Naive thymus-derived CD4-positive, alpha-beta T cell (primary cell): ENCODE measurements at regions of chr4 and their contacts with region 1.

Region 1: GRCh38 chr4:151760712-151761527 is at the start of gene GATB:
- DNase-seq: peak; percentile 67 to 97 (median 93)
- ATAC-seq: peak; percentile 99
- H3K4me3 ChIP-seq: peak within 1 kb of the TSS; percentile 87
- H3K4me3 Mint-ChIP-seq: peak within 1 kb of the TSS; percentile 88 to 99 (median 98)
- H3K27ac ChIP-seq: peak within 1 kb of the TSS; percentile 69
- H3K27ac Mint-ChIP-seq: peak within 1 kb of the TSS; percentile 94 to 99 (median 98)
- H3K4me1 ChIP-seq: peaks cover 9 to 13% of the 10 kb centered on the region in 2 donors
- H3K4me1 Mint-ChIP-seq: peaks cover 7 to 24% (median 18%) of the 10 kb centered on the region in 7 donors
- H3K27me3 ChIP-seq: no peaks in the 10 kb centered on the region
- H3K27me3 Mint-ChIP-seq: peaks cover 0 to 8% (median 4%) of the 10 kb centered on the region in 5 donors
- total RNA-seq, gene GATB: 10.5 to 17.3 (median 14.2) TPM

Region 2: GRCh38 chr4:151099229-151099975 is 661.5 kb before region 1 on chr4 and contains the start of gene RPS3A:
- CTCF ChIA-PET with region 1: no interaction called
- POLR2A ChIA-PET with region 1: interaction called, 5 read pairs
- intact Hi-C with region 1: loop called in 1 of 2 experiments (anchors 1 kb)
- DNase-seq: peak; percentile 95 to 100 (median 99)
- ATAC-seq: peak; percentile 97
- H3K4me3 ChIP-seq: peak within 1 kb of the TSS; percentile 96
- H3K4me3 Mint-ChIP-seq: peak within 1 kb of the TSS; percentile 89 to 99 (median 96)
- H3K27ac ChIP-seq: peak within 1 kb of the TSS; percentile 89
- H3K27ac Mint-ChIP-seq: peak within 1 kb of the TSS; percentile 97 to 99 (median 98)
- H3K4me1 ChIP-seq: peaks cover 14 to 18% of the 10 kb centered on the region in 2 donors
- H3K4me1 Mint-ChIP-seq: peaks cover 24 to 43% (median 28%) of the 10 kb centered on the region in 7 donors
- H3K27me3 ChIP-seq: no peaks in the 10 kb centered on the region
- H3K27me3 Mint-ChIP-seq: peaks cover 0 to 4% (median 0%) of the 10 kb centered on the region in 5 donors
- total RNA-seq, gene RPS3A: 1,723 to 5,358 (median 3,483) TPM

Region 3: DNA sequence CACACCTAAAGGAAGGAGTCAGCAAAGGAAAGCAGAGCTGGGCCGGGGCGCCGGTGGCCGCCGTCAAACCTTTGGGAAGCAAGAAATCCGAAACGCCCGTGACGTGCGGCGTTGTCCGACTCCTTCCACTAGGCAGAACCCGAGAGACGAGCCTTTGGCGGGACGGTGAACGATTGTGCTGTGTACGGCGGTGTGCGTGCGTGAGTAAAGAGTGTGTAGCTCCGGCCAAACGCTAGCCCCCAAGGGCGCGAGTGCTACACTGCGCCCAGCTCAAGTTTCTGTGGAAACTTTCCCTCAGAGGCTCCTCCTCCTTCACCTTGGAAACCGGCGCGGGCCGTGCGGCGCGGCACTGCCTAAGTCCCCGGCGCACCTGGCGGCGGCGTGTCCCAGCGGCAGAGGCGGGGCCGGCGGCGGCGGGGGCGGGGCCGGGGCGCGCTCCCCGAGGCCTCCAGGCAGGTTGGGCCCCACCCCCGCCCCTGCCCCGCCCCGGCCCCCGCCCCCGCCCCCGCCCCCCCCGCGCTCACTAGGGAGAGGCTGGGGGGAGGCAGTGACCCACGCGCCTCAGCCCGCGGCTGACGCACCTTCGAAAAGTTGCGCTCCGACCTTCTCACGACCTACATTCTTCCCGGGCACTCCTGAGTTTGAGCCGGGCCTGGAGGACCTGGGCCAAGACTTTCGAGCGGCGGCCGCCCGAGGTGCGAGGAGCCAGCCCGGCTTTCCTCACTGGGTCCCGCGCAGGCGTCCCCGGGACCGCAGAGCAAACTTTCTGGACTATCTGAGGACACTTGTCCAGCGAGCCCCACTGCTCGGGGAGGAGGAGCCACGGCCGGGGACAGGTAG is 352.1 kb before region 1 on chr4 and contains the start of gene FHIP1A:
- CTCF ChIA-PET with region 1: no interaction called
- POLR2A ChIA-PET with region 1: no interaction called
- intact Hi-C with region 1: loop called (anchors 1 kb)
- DNase-seq: peak; percentile 67 to 89 (median 87)
- ATAC-seq: peak; percentile 96
- H3K4me3 ChIP-seq: peak within 1 kb of the TSS; percentile 63
- H3K4me3 Mint-ChIP-seq: peak within 1 kb of the TSS; percentile 86 to 97 (median 94)
- H3K27ac ChIP-seq: peak within 1 kb of the TSS; percentile 53
- H3K27ac Mint-ChIP-seq: peak within 1 kb of the TSS; percentile 21 to 92 (median 85)
- H3K4me1 ChIP-seq: peaks cover 0 to 6% of the 10 kb centered on the region in 2 donors
- H3K4me1 Mint-ChIP-seq: peaks cover 15 to 26% (median 23%) of the 10 kb centered on the region in 7 donors
- H3K27me3 ChIP-seq: no peaks in the 10 kb centered on the region
- H3K27me3 Mint-ChIP-seq: peaks cover 0 to 56% (median 8%) of the 10 kb centered on the region in 5 donors
- total RNA-seq, gene FHIP1A: 0.05 to 2.7 (median 1.9) TPM

Region 4: DNA sequence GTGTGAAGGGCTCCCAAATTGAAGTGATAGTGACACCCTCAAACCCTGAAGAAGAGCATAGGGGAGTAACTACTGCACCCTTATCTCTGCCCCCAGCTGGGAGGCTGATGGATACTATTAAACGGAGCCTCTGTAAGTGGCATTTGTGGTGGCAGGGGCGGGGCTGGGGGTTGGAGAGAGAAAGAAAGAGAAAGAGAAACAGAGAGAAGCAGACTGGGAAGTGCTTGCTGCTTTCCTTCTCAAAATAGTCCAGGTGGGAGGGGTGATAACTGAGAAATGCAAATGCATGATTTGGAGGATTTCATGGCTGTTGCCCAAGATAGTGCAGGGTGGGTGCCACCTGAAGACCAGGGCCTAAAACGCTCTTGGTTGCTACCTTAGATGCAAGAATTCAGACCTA is 253.4 kb after region 1 on chr4:
- CTCF ChIA-PET with region 1: no interaction called
- POLR2A ChIA-PET with region 1: no interaction called
- intact Hi-C with region 1: loop called (anchors 2 kb)
- DNase-seq: peak in 4 of 9 donors; percentile 18 to 45 (median 29)
- ATAC-seq: peak; percentile 33
- H3K4me3 ChIP-seq: no peak overlapping the region
- H3K4me3 Mint-ChIP-seq: peak overlapping the region; percentile 14 to 73 (median 59)
- H3K27ac ChIP-seq: no peak overlapping the region
- H3K27ac Mint-ChIP-seq: peak overlapping the region; percentile 50 to 88 (median 80)
- H3K4me1 ChIP-seq: peaks cover 36 to 40% of the 10 kb centered on the region in 2 donors
- H3K4me1 Mint-ChIP-seq: peaks cover 41 to 67% (median 52%) of the 10 kb centered on the region in 7 donors
- H3K27me3 ChIP-seq: no peaks in the 10 kb centered on the region
- H3K27me3 Mint-ChIP-seq: peaks cover 0 to 4% (median 0%) of the 10 kb centered on the region in 5 donors

Region 5: GRCh38 chr4:152352622-152353116 is 591.7 kb after region 1 on chr4:
- CTCF ChIA-PET with region 1: no interaction called
- POLR2A ChIA-PET with region 1: no interaction called
- intact Hi-C with region 1: loop called in 1 of 2 experiments (anchors 1 kb)
- DNase-seq: peak in 6 of 9 donors; percentile 3 to 40 (median 32)
- ATAC-seq: peak; percentile 68
- H3K4me3 ChIP-seq: no peak overlapping the region
- H3K4me3 Mint-ChIP-seq: peak overlapping the region in 9 of 10 donors; percentile 9 to 68 (median 46)
- H3K27ac ChIP-seq: no peak overlapping the region
- H3K27ac Mint-ChIP-seq: peak overlapping the region in 2 of 9 donors; percentile 66 to 67
- H3K4me1 ChIP-seq: peaks cover 0 to 8% of the 10 kb centered on the region in 2 donors
- H3K4me1 Mint-ChIP-seq: peaks cover 11 to 39% (median 22%) of the 10 kb centered on the region in 7 donors
- H3K27me3 ChIP-seq: no peaks in the 10 kb centered on the region
- H3K27me3 Mint-ChIP-seq: no peaks in the 10 kb centered on the region

Region 6: DNA sequence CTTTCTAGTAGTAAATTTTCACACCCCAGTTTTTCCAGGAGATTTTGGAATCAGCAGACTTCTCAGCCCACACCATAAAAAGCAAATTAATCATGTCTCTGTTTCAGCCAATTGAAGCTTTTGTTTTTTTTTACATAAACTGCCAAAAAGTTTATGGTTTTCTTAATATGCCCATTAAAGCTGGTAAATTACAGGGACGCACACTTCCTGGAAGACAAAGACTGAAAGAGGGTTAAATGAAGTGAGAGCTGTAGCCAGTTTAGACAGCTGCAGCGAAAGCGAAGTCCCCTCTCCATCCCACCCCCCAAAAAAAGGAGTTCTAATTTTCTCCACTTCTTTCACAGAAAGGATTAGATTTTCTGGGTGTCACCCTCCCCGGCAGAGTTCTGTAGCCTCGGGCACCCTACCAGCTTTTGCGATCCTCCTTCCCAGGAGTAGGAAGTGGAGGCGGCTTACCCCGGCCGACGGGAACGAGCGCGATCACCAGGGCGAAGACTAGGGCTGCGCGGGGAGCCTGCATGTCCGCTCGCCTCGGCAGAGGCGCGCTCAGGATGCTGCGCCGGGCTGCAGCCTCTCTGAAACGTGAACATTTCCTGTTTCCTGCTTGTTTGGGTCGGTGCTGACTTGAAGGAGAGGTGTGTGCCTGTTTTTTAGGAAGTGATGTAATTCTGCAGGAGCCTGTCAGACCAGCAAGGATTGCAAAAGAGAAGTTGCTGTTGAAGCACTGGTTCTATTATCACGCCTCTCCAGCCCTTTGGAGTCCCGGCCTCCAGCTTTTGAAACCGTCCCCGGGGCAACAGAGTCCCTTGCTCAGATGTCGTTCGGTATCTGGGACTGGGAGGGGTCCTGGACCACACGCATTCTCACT is 918.7 kb after region 1 on chr4 and contains the start of gene TMEM154:
- CTCF ChIA-PET with region 1: no interaction called
- POLR2A ChIA-PET with region 1: no interaction called
- intact Hi-C with region 1: loop called in 1 of 2 experiments (anchors 5 kb)
- DNase-seq: peak; percentile 57 to 85 (median 77)
- ATAC-seq: peak; percentile 95
- H3K4me3 ChIP-seq: peak within 1 kb of the TSS; percentile 81
- H3K4me3 Mint-ChIP-seq: peak within 1 kb of the TSS; percentile 78 to 97 (median 95)
- H3K27ac ChIP-seq: peak within 1 kb of the TSS; percentile 77
- H3K27ac Mint-ChIP-seq: peak within 1 kb of the TSS; percentile 92 to 98 (median 96)
- H3K4me1 ChIP-seq: peaks cover 22% of the 10 kb centered on the region in 2 donors
- H3K4me1 Mint-ChIP-seq: peaks cover 39 to 71% (median 49%) of the 10 kb centered on the region in 7 donors
- H3K27me3 ChIP-seq: no peaks in the 10 kb centered on the region
- H3K27me3 Mint-ChIP-seq: no peaks in the 10 kb centered on the region
- total RNA-seq, gene TMEM154: 21.3 to 46.8 (median 36.9) TPM